ENCODE measurements at regions of chr1 and their contacts with region 1.

Region 1: DNA sequence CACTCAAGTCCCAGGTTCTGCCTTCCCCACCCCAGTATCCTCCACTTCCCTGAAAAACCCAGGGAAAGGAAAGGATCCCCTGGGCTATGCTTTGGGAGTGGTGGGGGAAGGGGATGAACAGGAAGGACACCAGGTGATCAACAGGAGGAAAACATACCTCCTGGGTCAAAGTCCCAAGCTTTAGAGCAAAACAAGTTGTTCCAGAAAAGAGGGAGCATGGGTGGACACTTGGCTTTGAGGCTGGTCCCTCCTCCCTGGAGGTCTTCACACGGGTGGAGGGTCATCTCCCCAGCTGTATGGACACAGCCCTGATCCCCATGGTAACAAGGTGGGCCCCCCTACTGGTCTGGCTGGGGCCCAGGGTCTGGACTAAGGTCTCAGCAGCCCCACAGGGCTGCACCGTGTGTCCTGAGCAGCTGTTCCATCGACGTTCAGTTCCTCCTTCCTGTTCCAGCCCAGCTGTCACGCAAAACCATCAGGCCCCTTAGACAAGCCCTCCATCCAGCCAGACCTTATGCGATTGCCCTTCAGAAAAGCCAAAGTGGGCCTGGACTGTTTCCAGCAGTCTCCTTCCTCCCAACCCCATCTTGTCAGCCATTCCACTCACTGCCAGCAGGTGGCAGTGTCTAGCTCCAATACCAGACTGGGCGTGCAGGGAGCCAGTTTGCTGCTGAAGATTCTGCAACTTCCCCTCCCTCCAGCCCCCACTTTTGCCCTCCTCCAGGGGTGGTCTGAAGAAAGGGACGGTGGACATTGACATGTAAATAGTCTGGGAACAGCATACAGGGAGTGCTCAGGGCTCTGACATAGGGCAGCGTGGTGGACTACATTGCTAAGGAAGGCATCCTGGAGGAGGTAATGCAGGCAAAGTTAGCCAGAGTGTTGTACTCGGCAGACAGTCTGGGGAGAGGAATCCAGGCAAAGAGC is 2.9 kb upstream of the PDZK1IP1 start:
- DNase-seq: peak; percentile 88 to 95 (median 90)
- ATAC-seq: peak; percentile 88
- H3K4me3 ChIP-seq: no peak overlapping the region
- H3K27ac ChIP-seq: peak overlapping the region; percentile 2; the same call in 2 of the 3 replicates
- H3K4me1 ChIP-seq: peaks cover 49 to 61% of the 10 kb centered on the region in 2 experiments
- H3K27me3 ChIP-seq: no peaks in the 10 kb centered on the region
- CTCF ChIP-seq: peak; percentile 96 to 100 (median 98)
- EP300 ChIP-seq: peak; percentile 51; the same call in 1 of the 2 replicates
- POLR2A ChIP-seq: no peak
- RAD21 ChIP-seq: peak; percentile 98

Region 2: GRCh38 chr1:46991083-46991923 is 201.4 kb before region 1 on chr1:
- CTCF ChIA-PET with region 1: no interaction called
- POLR2A ChIA-PET with region 1: no interaction called
- in situ Hi-C with region 1: no loop called
- intact Hi-C with region 1: no loop called
- DNase-seq: peak in 3 of 4 experiments; percentile 2 to 25 (median 16)
- ATAC-seq: peak; percentile 84
- H3K4me3 ChIP-seq: no peak overlapping the region
- H3K27ac ChIP-seq: no peak overlapping the region
- H3K4me1 ChIP-seq: no peaks in the 10 kb centered on the region
- H3K27me3 ChIP-seq: peaks cover 0 to 5% of the 10 kb centered on the region in 2 experiments; a peak in 2 of 5 replicates
- CTCF ChIP-seq: peak; percentile 38 to 61 (median 44); a peak in 4 of 6 replicates
- EP300 ChIP-seq: no peak
- POLR2A ChIP-seq: no peak
- RAD21 ChIP-seq: peak in 1 of 2 experiments; percentile 64; a peak in 2 of 4 replicates

Region 3: GRCh38 chr1:47137925-47138615 is 54.7 kb before region 1 on chr1:
- CTCF ChIA-PET with region 1: no interaction called
- POLR2A ChIA-PET with region 1: no interaction called
- in situ Hi-C with region 1: no loop called
- intact Hi-C with region 1: no loop called
- DNase-seq: no peak
- ATAC-seq: peak; percentile 49; the same call in 2 of the 3 replicates
- H3K4me3 ChIP-seq: no peak overlapping the region
- H3K27ac ChIP-seq: no peak overlapping the region
- H3K4me1 ChIP-seq: no peaks in the 10 kb centered on the region; a peak in 1 of 5 replicates
- H3K27me3 ChIP-seq: no peaks in the 10 kb centered on the region; a peak in 2 of 5 replicates
- CTCF ChIP-seq: no peak
- EP300 ChIP-seq: no peak
- POLR2A ChIP-seq: no peak
- RAD21 ChIP-seq: no peak

Region 4: GRCh38 chr1:47211796-47212269 is 19.1 kb after region 1 on chr1:
- CTCF ChIA-PET with region 1: no interaction called
- POLR2A ChIA-PET with region 1: interaction called, 11 read pairs
- in situ Hi-C with region 1: no loop called
- intact Hi-C with region 1: no loop called
- DNase-seq: peak; percentile 58 to 82 (median 66)
- ATAC-seq: peak; percentile 59
- H3K4me3 ChIP-seq: no peak overlapping the region
- H3K27ac ChIP-seq: peak overlapping the region; percentile 55
- H3K4me1 ChIP-seq: peaks cover 49 to 57% of the 10 kb centered on the region in 2 experiments
- H3K27me3 ChIP-seq: no peaks in the 10 kb centered on the region
- CTCF ChIP-seq: no peak
- EP300 ChIP-seq: peak; percentile 69; the same call in 1 of the 2 replicates
- POLR2A ChIP-seq: peak; percentile 32; the same call in 1 of the 2 replicates
- RAD21 ChIP-seq: no peak

Region 5: DNA sequence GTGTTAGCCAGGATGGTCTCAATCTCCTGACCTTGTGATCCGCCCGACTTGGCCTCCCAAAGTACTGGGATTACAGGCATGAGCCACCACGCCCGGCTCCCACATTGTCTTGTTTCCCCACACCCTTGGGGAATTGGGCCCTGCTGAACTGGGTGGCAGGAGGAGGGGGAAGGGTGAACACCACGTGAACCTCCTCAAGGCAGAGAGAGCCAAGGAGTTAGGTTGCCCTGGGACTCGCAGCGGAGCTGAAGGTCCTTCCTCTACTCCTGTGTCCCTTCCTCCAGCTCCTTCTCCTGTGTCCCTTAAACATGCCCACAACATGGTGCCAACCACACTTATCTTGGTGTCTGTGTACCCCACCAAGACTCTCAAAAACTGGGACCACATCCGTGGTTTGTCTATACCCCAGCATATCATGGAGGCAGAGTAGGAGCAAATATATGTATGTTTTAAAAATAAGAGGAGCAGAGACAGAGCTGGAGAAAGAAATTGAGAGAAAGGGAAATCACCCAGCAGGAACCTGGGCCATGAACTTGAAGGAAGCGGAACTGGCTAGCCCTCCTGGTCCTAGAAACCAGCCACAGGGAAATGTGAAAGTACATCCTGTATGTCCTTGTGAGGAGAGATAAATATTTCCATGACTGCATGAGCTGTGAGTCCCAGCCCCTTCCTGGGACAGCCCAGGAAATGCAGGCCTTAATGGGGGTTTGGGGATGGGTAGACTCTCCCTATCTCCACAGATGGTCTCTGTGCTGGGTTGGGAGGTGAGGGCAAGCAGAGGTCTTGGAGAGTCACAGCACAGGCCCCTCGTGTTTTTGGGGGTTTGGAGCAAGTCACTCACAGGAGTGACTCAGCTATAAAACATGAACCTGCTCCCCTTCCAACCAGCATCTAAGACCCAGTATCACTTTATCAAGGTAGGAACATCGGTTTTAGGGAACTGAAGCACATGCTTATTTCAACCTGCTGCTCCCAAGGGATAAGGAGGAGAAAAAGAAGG is 48.7 kb after region 1 on chr1:
- CTCF ChIA-PET with region 1: interaction called, 3 read pairs
- POLR2A ChIA-PET with region 1: interaction called, 3 read pairs
- in situ Hi-C with region 1: no loop called
- intact Hi-C with region 1: loop called (anchors 2 kb)
- DNase-seq: peak; percentile 58 to 78 (median 66)
- ATAC-seq: peak; percentile 40
- H3K4me3 ChIP-seq: no peak overlapping the region
- H3K27ac ChIP-seq: peak overlapping the region; percentile 78
- H3K4me1 ChIP-seq: peaks cover 45 to 65% of the 10 kb centered on the region in 2 experiments
- H3K27me3 ChIP-seq: no peaks in the 10 kb centered on the region
- CTCF ChIP-seq: no peak
- EP300 ChIP-seq: 0 out of 2 replicates have a peak, but pooled peaks have one; percentile 34
- POLR2A ChIP-seq: peak; percentile 49; the same call in 1 of the 2 replicates
- RAD21 ChIP-seq: no peak

Region 6: GRCh38 chr1:47262787-47263413 is 70.2 kb after region 1 on chr1:
- CTCF ChIA-PET with region 1: interaction called, 44 read pairs
- POLR2A ChIA-PET with region 1: interaction called, 15 read pairs
- in situ Hi-C with region 1: loop called (anchors 5 kb)
- intact Hi-C with region 1: loop called (anchors 1 kb)
- DNase-seq: peak; percentile 68 to 82 (median 74)
- ATAC-seq: peak; percentile 91
- H3K4me3 ChIP-seq: no peak overlapping the region
- H3K27ac ChIP-seq: no peak overlapping the region
- H3K4me1 ChIP-seq: no peaks in the 10 kb centered on the region
- H3K27me3 ChIP-seq: no peaks in the 10 kb centered on the region
- CTCF ChIP-seq: peak; percentile 84 to 92 (median 85)
- EP300 ChIP-seq: no peak
- POLR2A ChIP-seq: no peak
- RAD21 ChIP-seq: peak; percentile 92 to 94

Region 7: GRCh38 chr1:47424336-47424982 is 231.7 kb after region 1 on chr1:
- CTCF ChIA-PET with region 1: interaction called, 17 read pairs
- POLR2A ChIA-PET with region 1: no interaction called
- in situ Hi-C with region 1: no loop called
- intact Hi-C with region 1: no loop called
- DNase-seq: peak; percentile 55 to 77 (median 70)
- ATAC-seq: peak; percentile 66
- H3K4me3 ChIP-seq: no peak overlapping the region
- H3K27ac ChIP-seq: no peak overlapping the region
- H3K4me1 ChIP-seq: no peaks in the 10 kb centered on the region; a peak in 1 of 5 replicates
- H3K27me3 ChIP-seq: peaks cover 18 to 31% of the 10 kb centered on the region in 2 experiments
- CTCF ChIP-seq: peak; percentile 85 to 94 (median 91)
- EP300 ChIP-seq: no peak
- POLR2A ChIP-seq: no peak
- RAD21 ChIP-seq: peak; percentile 49 to 74; a peak in 3 of 4 replicates

Region 8: GRCh38 chr1:47710329-47711071 is 517.8 kb after region 1 on chr1:
- CTCF ChIA-PET with region 1: no interaction called
- POLR2A ChIA-PET with region 1: no interaction called
- in situ Hi-C with region 1: loop called (anchors 10 kb)
- intact Hi-C with region 1: no loop called
- DNase-seq: peak; percentile 71 to 97 (median 94)
- ATAC-seq: peak; percentile 96
- H3K4me3 ChIP-seq: no peak overlapping the region
- H3K27ac ChIP-seq: no peak overlapping the region
- H3K4me1 ChIP-seq: peaks cover 0 to 24% of the 10 kb centered on the region in 2 experiments; a peak in 2 of 5 replicates
- H3K27me3 ChIP-seq: peaks cover 30 to 60% of the 10 kb centered on the region in 2 experiments; a peak in 4 of 5 replicates
- CTCF ChIP-seq: peak; percentile 93 to 98 (median 96)
- EP300 ChIP-seq: no peak
- POLR2A ChIP-seq: no peak
- RAD21 ChIP-seq: peak; percentile 87 to 95

Region 9: GRCh38 chr1:48093696-48094528 is 901.2 kb after region 1 on chr1:
- CTCF ChIA-PET with region 1: no interaction called
- POLR2A ChIA-PET with region 1: no interaction called
- in situ Hi-C with region 1: no loop called
- intact Hi-C with region 1: no loop called
- DNase-seq: peak; percentile 75 to 82 (median 79)
- ATAC-seq: peak; percentile 98
- H3K4me3 ChIP-seq: no peak overlapping the region
- H3K27ac ChIP-seq: no peak overlapping the region
- H3K4me1 ChIP-seq: peaks cover 0 to 5% of the 10 kb centered on the region in 2 experiments; a peak in 1 of 5 replicates
- H3K27me3 ChIP-seq: peaks cover 0 to 8% of the 10 kb centered on the region in 2 experiments; a peak in 2 of 5 replicates
- CTCF ChIP-seq: peak; percentile 80 to 89 (median 87)
- EP300 ChIP-seq: no peak
- POLR2A ChIP-seq: no peak
- RAD21 ChIP-seq: peak; percentile 43 to 77

Measured in K562 (cell line).